Panc1 (cell line): ENCODE measurements at regions of chr17 and their contacts with region 1.

Region 1: DNA sequence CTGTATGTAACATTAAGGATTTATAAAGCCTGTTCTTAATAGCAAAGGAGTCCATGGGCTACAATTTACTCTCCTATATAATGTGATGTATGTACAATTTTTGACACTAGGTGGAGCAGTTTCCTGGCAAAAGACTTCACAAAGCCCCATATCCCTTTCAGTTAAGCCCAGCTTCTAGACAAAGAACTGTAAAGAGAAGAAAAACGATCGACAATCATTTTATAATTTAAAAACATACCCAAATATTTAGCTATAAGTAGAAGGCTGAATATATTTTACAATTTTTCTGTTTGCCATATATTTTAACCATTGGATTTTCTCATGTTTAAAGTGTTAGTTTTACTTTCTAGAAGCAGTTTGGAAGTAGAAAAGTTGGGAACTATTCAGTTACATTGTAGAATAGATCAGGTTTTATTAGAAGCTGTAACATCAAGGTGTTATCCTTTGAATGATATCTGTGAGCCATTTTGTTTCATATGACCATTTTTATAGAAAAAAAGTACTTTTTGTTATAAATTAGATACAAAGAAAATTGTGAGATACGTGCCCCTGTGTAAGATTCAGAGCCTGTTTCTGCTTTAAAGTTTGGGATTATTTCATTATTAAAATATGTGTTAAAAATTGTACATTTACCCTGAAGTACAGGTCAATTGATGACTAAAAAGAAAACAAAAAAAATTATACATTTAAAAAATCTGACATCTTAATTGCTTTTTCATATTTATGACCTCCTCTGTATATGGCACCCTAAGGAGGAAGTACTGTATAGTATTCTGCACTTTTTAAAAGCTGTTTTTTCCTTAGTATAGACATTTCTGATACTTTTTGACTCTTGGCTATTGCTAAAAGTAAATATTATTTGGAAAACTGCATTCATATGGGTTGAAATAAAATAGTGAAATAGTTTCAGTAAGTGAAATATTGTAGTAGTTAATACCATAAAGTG is 46.3 kb downstream of the VMP1 start:
- DNase-seq: peak; percentile 83
- ATAC-seq: peak; percentile 64
- H3K4me3 ChIP-seq: no peak overlapping the region
- H3K27ac ChIP-seq: peak overlapping the region; percentile 100
- H3K4me1 ChIP-seq: peaks cover 63% of the 10 kb centered on the region
- H3K27me3 ChIP-seq: no peaks in the 10 kb centered on the region
- CTCF ChIP-seq: peak; percentile 67; the same call in 1 of the 2 replicates

Region 2: GRCh38 chr17:59300682-59301321 is 453.0 kb before region 1 on chr17:
- CTCF ChIA-PET with region 1: no interaction called
- POLR2A ChIA-PET with region 1: no interaction called
- in situ Hi-C with region 1: no loop called
- intact Hi-C with region 1: no loop called
- DNase-seq: no peak
- ATAC-seq: no peak
- H3K4me3 ChIP-seq: no peak overlapping the region
- H3K27ac ChIP-seq: no peak overlapping the region
- H3K4me1 ChIP-seq: no peaks in the 10 kb centered on the region
- H3K27me3 ChIP-seq: no peaks in the 10 kb centered on the region
- CTCF ChIP-seq: no peak

Region 3: DNA sequence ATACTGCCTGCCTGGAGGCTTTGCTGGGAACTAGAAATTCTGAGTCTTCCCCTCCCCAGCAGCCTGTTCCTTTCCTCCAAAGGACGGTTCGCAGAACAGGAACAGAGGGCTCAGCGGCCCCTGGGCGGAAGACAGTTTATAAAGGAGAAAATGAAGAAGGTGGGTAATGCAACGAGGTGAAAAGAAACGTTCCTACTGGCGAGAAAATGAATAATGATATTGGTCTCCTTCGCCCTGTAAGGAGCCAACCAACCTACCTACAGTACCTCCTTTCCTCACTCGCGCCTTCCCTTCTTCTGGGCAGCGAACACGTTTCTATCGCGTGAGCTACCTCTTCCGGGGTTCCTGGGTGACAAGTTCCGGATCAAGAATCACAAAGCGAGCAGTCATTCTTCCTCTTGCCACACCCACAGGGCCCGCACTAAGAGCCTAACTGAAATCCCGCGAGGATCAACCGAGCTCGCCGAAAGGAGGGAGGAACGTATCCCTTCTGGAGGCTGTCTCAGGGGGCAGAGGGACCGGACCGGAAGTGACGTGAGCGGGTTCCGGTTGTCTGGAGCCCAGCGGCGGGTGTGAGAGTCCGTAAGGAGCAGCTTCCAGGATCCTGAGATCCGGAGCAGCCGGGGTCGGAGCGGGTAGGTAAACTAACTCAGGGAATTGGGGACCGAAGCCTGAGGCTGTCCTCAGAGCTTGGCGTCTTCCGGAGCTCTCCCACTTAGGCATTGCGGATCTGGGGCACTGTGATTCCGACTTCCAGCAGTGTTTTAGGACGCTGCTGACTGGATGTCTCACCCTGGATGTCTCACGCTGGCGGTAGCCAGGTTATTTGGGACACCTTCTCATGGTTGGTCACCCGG is 46.5 kb before region 1 on chr17 and contains the starts of genes PTRH2 and VMP1:
- CTCF ChIA-PET with region 1: no interaction called
- POLR2A ChIA-PET with region 1: interaction called, 11 read pairs
- in situ Hi-C with region 1: no loop called
- intact Hi-C with region 1: no loop called
- DNase-seq: peak; percentile 93
- ATAC-seq: peak; percentile 96
- H3K4me3 ChIP-seq: peak within 1 kb of the TSS; percentile 99
- H3K27ac ChIP-seq: peak within 1 kb of the TSS; percentile 100
- H3K4me1 ChIP-seq: peaks cover 24% of the 10 kb centered on the region
- H3K27me3 ChIP-seq: no peaks in the 10 kb centered on the region
- CTCF ChIP-seq: no peak
- total RNA-seq, gene PTRH2: 40.2 TPM
- total RNA-seq, gene VMP1: 281 TPM

Region 4: DNA sequence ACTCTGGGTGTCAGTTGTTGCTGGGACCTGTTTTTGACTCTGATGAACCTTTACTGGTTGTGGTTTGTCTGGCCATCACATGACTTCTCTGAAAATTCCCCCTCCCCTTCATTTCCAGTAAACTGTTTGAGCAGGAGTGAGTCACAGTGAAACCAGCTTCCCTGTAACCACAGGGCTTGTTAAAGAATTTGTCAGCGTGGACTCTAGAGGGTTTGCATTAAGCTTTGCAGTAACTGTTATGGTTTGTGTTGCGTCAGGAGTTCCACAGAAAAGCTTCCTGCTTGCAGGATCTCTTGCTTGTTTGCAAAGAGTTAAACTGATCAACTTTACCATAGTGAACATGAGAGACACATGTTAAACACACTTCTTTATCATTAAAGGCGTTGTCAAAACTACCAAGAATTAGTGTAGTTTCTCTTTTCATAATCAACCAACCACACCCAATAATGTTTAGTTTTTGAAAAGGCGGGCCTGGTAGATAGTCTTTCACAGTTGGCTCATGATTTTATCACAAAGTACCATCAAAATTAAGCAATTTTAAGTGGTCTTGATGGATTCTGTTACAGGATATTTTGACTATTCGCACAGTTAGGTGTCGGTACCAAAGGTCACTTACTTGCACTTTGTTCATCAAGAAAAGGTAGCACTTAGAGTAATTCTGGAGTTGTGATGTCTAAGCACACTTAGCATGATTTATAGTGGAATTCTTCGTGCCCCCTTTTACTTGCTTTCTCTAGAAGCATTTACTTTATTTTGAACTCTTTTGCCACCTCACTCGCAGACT is 32.9 kb after region 1 on chr17:
- CTCF ChIA-PET with region 1: interaction called, 7 read pairs
- POLR2A ChIA-PET with region 1: interaction called, 8 read pairs
- in situ Hi-C with region 1: no loop called
- intact Hi-C with region 1: loop called (anchors 2 kb)
- DNase-seq: peak; percentile 94
- ATAC-seq: peak; percentile 89
- H3K4me3 ChIP-seq: no peak overlapping the region
- H3K27ac ChIP-seq: peak overlapping the region; percentile 100
- H3K4me1 ChIP-seq: peaks cover 59% of the 10 kb centered on the region
- H3K27me3 ChIP-seq: no peaks in the 10 kb centered on the region
- CTCF ChIP-seq: no peak